CD14-positive monocyte (primary cell): ENCODE measurements at regions of chr9 and their contacts with region 1.

Region 1: GRCh38 chr9:4750023-4750673 is 9.1 kb upstream of the AK3 start:
- DNase-seq: peak in 2 of 3 donors; percentile 27 to 55
- H3K4me3 ChIP-seq: no peak overlapping the region
- H3K4me3 Mint-ChIP-seq: no peak overlapping the region
- H3K27ac ChIP-seq: no peak overlapping the region
- H3K27ac Mint-ChIP-seq: no peak overlapping the region
- H3K4me1 ChIP-seq: peaks cover 0 to 10% of the 10 kb centered on the region in 2 donors
- H3K4me1 Mint-ChIP-seq: peaks cover 11% of the 10 kb centered on the region
- H3K27me3 ChIP-seq: no peaks in the 10 kb centered on the region
- H3K27me3 Mint-ChIP-seq: peaks cover 5 to 9% (median 5%) of the 10 kb centered on the region in 3 donors
- CTCF ChIP-seq: peak; percentile 76

Region 2: GRCh38 chr9:4315582-4316215 is 434.4 kb before region 1 on chr9:
- intact Hi-C with region 1: no loop called
- DNase-seq: peak; percentile 44 to 65 (median 64)
- H3K4me3 ChIP-seq: no peak overlapping the region
- H3K4me3 Mint-ChIP-seq: no peak overlapping the region
- H3K27ac ChIP-seq: no peak overlapping the region
- H3K27ac Mint-ChIP-seq: peak overlapping the region in 1 of 7 donors; percentile 39
- H3K4me1 ChIP-seq: no peaks in the 10 kb centered on the region
- H3K4me1 Mint-ChIP-seq: no peaks in the 10 kb centered on the region
- H3K27me3 ChIP-seq: no peaks in the 10 kb centered on the region
- H3K27me3 Mint-ChIP-seq: peaks cover 8% of the 10 kb centered on the region in 3 donors
- CTCF ChIP-seq: peak; percentile 95

Region 3: DNA sequence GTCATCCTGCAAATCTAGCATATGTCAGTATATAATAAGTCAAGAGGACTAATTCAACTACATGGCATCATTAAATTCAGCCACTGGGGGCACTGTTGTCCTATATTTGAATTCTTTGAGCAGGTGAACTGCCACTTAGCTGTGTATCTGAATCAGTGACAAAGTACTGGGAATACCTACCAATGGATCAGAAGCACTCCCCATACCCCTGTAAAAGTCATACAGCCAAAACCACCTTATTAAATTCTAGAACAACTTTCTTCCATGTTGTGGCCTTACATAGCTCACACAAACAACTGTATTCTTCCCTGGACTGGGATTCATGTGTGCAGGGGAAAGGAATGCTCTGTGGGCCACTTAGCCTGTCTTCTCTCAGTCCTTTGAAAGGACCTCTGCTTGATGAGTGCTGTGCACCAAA is 145.5 kb before region 1 on chr9:
- intact Hi-C with region 1: no loop called
- DNase-seq: peak; percentile 18 to 63 (median 51)
- H3K4me3 ChIP-seq: no peak overlapping the region
- H3K4me3 Mint-ChIP-seq: no peak overlapping the region
- H3K27ac ChIP-seq: no peak overlapping the region
- H3K27ac Mint-ChIP-seq: no peak overlapping the region
- H3K4me1 ChIP-seq: no peaks in the 10 kb centered on the region
- H3K4me1 Mint-ChIP-seq: peaks cover 7% of the 10 kb centered on the region
- H3K27me3 ChIP-seq: no peaks in the 10 kb centered on the region
- H3K27me3 Mint-ChIP-seq: peaks cover 1 to 8% (median 8%) of the 10 kb centered on the region in 3 donors
- CTCF ChIP-seq: peak; percentile 77

Region 4: DNA sequence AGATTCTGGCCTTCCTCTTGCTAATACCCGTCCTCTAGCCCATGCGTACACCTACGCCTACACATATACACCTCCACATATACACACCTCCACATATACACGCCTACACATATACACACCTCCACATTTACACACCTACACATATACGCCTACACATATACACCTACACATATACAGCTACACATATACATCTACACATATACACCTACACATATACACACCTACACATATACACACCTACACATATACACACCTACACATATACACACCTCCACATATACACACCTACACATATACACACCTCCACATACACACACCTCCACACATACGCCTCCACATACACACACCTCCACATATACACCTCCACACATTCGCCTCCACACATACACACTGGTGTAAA is 36.3 kb before region 1 on chr9:
- intact Hi-C with region 1: no loop called
- DNase-seq: no peak
- H3K4me3 ChIP-seq: no peak overlapping the region
- H3K4me3 Mint-ChIP-seq: no peak overlapping the region
- H3K27ac ChIP-seq: no peak overlapping the region
- H3K27ac Mint-ChIP-seq: peak overlapping the region in 1 of 7 donors; percentile 7
- H3K4me1 ChIP-seq: no peaks in the 10 kb centered on the region
- H3K4me1 Mint-ChIP-seq: no peaks in the 10 kb centered on the region
- H3K27me3 ChIP-seq: no peaks in the 10 kb centered on the region
- H3K27me3 Mint-ChIP-seq: no peaks in the 10 kb centered on the region
- CTCF ChIP-seq: no peak

Region 5: GRCh38 chr9:4832786-4833579 is 82.8 kb after region 1 on chr9:
- intact Hi-C with region 1: no loop called
- DNase-seq: peak in 2 of 3 donors; percentile 5 to 31
- H3K4me3 ChIP-seq: no peak overlapping the region
- H3K4me3 Mint-ChIP-seq: no peak overlapping the region
- H3K27ac ChIP-seq: no peak overlapping the region
- H3K27ac Mint-ChIP-seq: no peak overlapping the region
- H3K4me1 ChIP-seq: no peaks in the 10 kb centered on the region
- H3K4me1 Mint-ChIP-seq: peaks cover 5% of the 10 kb centered on the region
- H3K27me3 ChIP-seq: no peaks in the 10 kb centered on the region
- H3K27me3 Mint-ChIP-seq: no peaks in the 10 kb centered on the region
- CTCF ChIP-seq: no peak

Region 6: GRCh38 chr9:4923580-4924544 is 173.7 kb after region 1 on chr9:
- intact Hi-C with region 1: loop called in 1 of 2 experiments (anchors 10 kb)
- DNase-seq: peak in 2 of 3 donors; percentile 20 to 29
- H3K4me3 ChIP-seq: no peak overlapping the region
- H3K4me3 Mint-ChIP-seq: no peak overlapping the region
- H3K27ac ChIP-seq: peak overlapping the region in 1 of 2 donors; percentile 1
- H3K27ac Mint-ChIP-seq: no peak overlapping the region
- H3K4me1 ChIP-seq: peaks cover 0 to 10% of the 10 kb centered on the region in 2 donors
- H3K4me1 Mint-ChIP-seq: peaks cover 27% of the 10 kb centered on the region
- H3K27me3 ChIP-seq: no peaks in the 10 kb centered on the region
- H3K27me3 Mint-ChIP-seq: no peaks in the 10 kb centered on the region
- CTCF ChIP-seq: peak; percentile 48

Region 7: DNA sequence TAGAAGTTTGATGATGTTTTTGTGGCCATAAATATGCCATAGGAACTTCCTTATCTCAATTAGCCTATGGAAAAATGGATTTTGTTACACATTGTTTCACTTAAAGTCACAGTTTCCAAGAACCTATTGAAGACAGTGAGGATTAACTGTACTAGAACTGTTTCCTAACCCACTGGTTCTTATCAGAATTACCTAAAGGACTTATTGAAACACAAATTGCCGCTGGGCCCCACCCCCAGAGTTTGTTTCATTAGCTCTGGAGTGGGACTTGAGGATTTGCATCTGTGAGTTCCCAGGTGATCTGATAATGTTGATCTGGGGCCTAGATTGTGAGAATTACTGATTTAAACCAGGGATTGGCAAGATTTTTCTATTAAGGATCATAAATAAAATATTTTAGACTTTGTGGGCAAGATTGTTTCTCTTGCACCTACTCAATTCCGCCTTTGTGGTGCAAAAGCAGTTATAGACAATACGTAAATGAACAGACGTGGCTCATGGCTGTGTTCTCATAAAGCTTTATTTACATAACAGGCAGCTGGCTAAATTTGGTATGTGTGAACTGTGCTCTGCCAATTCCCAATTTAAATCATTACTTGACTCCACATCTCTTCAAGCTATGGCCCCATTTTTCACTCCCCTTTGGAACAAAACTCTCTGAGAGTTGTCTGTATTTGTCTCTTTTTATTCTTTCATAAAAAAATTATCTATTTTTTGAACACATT is 244.2 kb after region 1 on chr9:
- intact Hi-C with region 1: loop called in 1 of 2 experiments (anchors 5 kb)
- DNase-seq: no peak
- H3K4me3 ChIP-seq: no peak overlapping the region
- H3K4me3 Mint-ChIP-seq: no peak overlapping the region
- H3K27ac ChIP-seq: peak overlapping the region in 1 of 2 donors; percentile 21
- H3K27ac Mint-ChIP-seq: peak overlapping the region in 4 of 7 donors; percentile 15 to 70 (median 51)
- H3K4me1 ChIP-seq: peaks cover 3 to 21% of the 10 kb centered on the region in 2 donors
- H3K4me1 Mint-ChIP-seq: peaks cover 42% of the 10 kb centered on the region
- H3K27me3 ChIP-seq: no peaks in the 10 kb centered on the region
- H3K27me3 Mint-ChIP-seq: no peaks in the 10 kb centered on the region
- CTCF ChIP-seq: no peak